PC-3 (cell line): ENCODE measurements at regions of chr1 and their contacts with region 1.

Region 1: GRCh38 chr1:51265618-51266017 is 29.5 kb downstream of the RNF11 start:
- DNase-seq: no peak
- ATAC-seq: no peak
- H3K4me3 ChIP-seq: no peak overlapping the region
- H3K27ac ChIP-seq: no peak overlapping the region
- H3K4me1 ChIP-seq: peaks cover 57% of the 10 kb centered on the region
- H3K27me3 ChIP-seq: no peaks in the 10 kb centered on the region
- CTCF ChIP-seq: no peak

Region 2: DNA sequence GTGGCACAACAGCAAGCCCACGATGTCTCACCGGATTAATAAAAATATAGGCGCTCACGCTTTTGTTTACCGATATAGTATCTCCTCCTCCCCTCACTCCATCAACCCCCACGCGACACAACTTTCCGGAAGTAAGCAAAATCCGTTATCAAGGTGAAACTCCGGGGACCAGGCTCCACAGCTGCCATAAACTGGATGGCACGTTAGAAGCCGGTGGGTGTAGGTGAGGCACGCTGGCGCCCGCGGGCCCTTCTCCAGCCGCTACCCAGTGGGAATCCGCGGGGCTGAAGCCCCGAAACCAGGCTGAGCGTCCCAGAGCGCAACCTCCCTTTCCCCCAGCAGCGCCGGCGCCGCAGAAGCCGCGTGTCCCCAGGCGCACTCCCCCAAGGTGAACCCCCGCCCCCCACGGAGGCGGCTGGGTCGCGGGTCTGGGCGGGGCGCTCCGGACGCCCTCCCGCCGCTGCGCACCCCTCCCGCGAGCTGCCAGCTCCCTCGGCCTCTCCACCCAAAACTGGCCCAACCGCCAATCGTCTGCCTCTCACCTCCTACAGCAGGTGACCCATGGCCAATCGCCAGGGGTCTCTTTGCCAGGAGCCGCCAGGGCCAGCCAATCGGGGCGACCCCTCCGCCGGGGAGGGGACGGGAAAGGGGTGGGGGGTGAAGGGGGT is 463.7 kb after region 1 on chr1:
- CTCF ChIA-PET with region 1: no interaction called
- POLR2A ChIA-PET with region 1: interaction called, 10 read pairs
- intact Hi-C with region 1: no loop called
- DNase-seq: no peak
- ATAC-seq: no peak
- H3K4me3 ChIP-seq: no peak overlapping the region
- H3K27ac ChIP-seq: no peak overlapping the region
- H3K4me1 ChIP-seq: peaks cover 7% of the 10 kb centered on the region; the same call in 1 of the 2 replicates
- H3K27me3 ChIP-seq: no peaks in the 10 kb centered on the region
- CTCF ChIP-seq: no peak

Region 3: GRCh38 chr1:52348704-52349300 is 1083.2 kb after region 1 on chr1:
- CTCF ChIA-PET with region 1: no interaction called
- POLR2A ChIA-PET with region 1: no interaction called
- intact Hi-C with region 1: no loop called
- DNase-seq: peak; percentile 11
- ATAC-seq: peak; percentile 40; the same call in 1 of the 2 replicates
- H3K4me3 ChIP-seq: no peak overlapping the region
- H3K27ac ChIP-seq: no peak overlapping the region
- H3K4me1 ChIP-seq: peaks cover 13% of the 10 kb centered on the region; the same call in 1 of the 2 replicates
- H3K27me3 ChIP-seq: no peaks in the 10 kb centered on the region
- CTCF ChIP-seq: peak; percentile 37; the same call in 1 of the 2 replicates